Right lobe of liver (tissue), 6 donors: ENCODE measurements at regions of chr6 and their contacts with region 1.

Region 1: GRCh38 chr6:31058128-31058894 is 48.0 kb downstream of the MUC22 start:
- DNase-seq: no peak
- ATAC-seq: peak; percentile 43 to 79 (median 54)
- H3K4me3 ChIP-seq: no peak overlapping the region
- H3K27ac ChIP-seq: no peak overlapping the region
- H3K4me1 ChIP-seq: no peaks in the 10 kb centered on the region
- H3K27me3 ChIP-seq: no peaks in the 10 kb centered on the region
- CTCF ChIP-seq: peak; percentile 33 to 50 (median 42)
- POLR2A ChIP-seq: no peak

Region 2: DNA sequence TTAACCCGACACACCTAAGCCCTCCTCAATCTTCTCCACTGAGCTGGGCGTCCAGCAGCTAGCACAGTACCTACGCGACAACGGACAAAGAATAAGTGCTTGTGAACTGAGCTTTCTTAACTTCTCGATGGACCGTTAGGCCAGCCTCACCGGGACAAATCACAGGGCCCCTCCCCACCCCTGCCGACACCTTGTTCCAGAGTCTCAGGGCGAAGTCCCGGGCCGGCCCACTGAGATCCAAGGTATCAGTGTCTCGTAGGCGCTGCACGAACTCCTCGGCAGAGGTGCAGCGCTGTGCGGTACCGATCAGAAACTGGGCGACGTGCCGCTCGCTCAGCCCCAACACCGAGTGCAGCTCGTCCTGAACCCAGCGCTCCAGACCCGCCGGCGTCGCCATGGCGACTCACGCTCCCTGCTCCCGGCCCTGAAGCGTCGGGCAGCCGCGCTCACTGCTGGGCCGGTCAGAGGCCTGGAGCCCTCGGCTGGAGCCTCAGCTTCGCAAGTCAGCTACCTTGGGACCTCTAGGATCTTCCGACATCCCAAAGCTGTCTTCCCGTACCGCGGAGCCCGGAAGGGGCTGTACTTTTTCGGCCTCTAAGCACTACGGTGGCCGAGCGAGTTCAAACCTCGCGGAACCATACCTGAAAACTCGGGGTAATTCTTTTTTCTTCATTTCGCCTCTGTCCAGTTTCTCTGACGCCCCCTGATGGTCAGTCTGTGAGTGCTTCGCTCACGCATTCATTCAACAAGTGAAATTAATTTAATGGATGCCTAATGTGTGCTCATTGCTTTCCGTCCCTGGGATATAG is 385.7 kb before region 1 on chr6 and contains the start of gene DHX16:
- intact Hi-C with region 1: no loop called
- DNase-seq: peak; percentile 93 to 96 (median 94)
- ATAC-seq: peak; percentile 84 to 89 (median 84)
- H3K4me3 ChIP-seq: peak within 1 kb of the TSS; percentile 91 to 100 (median 100)
- H3K27ac ChIP-seq: peak within 1 kb of the TSS; percentile 54 to 60 (median 58)
- H3K4me1 ChIP-seq: peaks cover 0 to 45% (median 10%) of the 10 kb centered on the region in 4 donors
- H3K27me3 ChIP-seq: no peaks in the 10 kb centered on the region
- CTCF ChIP-seq: peak; percentile 82 to 89 (median 86)
- POLR2A ChIP-seq: peak; percentile 44
- total RNA-seq, gene DHX16: 12.3 to 17.8 (median 14.4) TPM

Region 3: DNA sequence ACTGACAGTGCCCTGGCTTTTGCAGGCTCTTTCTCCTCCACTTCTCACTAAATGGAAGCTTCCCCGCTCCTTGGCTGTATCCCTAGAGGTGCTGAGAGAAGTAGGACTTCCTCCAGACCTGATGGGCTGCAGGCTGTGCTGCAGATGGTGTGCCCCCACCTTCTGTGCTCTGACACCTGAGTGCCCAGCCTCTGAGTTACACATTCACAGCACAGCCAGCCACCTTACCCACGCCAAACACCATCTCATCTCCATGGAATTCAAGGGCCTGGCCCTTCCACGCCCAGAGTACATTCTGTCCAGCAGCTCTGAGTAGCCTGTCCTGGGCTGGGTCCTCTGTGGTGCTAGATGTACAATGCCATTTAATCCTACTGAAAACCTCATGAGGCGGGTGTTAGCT is 131.7 kb before region 1 on chr6:
- intact Hi-C with region 1: loop called in 1 of 2 experiments (anchors 10 kb)
- DNase-seq: no peak
- ATAC-seq: peak in 3 of 4 donors; percentile 31 to 34 (median 32)
- H3K4me3 ChIP-seq: no peak overlapping the region
- H3K27ac ChIP-seq: no peak overlapping the region
- H3K4me1 ChIP-seq: no peaks in the 10 kb centered on the region
- H3K27me3 ChIP-seq: no peaks in the 10 kb centered on the region
- CTCF ChIP-seq: no peak
- POLR2A ChIP-seq: no peak

Region 4: GRCh38 chr6:31216208-31216898 is 158.0 kb after region 1 on chr6:
- intact Hi-C with region 1: no loop called
- DNase-seq: peak in 1 of 3 donors; percentile 46
- ATAC-seq: peak; percentile 58 to 75 (median 68)
- H3K4me3 ChIP-seq: no peak overlapping the region
- H3K27ac ChIP-seq: peak overlapping the region in 1 of 3 donors; percentile 15
- H3K4me1 ChIP-seq: no peaks in the 10 kb centered on the region
- H3K27me3 ChIP-seq: no peaks in the 10 kb centered on the region
- CTCF ChIP-seq: no peak
- POLR2A ChIP-seq: no peak

Region 5: DNA sequence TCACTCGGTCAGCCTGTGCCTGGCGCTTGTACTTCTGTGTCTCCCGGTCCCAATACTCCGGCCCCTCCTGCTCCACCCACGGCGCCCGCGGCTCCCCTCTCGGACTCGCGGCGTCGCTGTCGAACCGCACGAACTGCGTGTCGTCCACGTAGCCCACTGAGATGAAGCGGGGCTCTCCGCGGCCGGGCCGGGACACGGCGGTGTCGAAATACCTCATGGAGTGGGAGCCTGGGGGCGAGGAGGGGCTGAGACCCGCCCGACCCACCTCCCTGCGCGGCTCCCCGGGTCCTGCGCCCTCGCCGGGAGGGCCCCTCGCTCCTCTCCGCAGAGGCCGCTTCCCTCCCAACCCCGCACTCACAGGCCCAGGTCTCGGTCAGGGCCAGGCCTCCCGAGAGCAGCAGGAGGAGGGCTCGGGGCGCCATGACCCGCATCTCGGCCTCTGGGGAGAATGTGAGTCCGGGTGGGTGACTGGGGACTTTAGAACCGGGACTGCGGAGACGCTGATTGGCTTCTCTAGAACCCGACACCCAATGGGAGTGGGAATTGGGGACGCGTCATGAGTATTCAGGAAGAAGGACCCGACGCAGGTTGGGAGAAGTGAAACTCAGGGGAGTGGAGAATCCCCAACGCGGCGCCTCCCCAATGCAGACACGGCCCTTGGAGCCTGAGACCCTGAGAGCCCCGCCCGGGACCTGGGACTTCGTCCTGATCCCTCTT is 213.5 kb after region 1 on chr6 and contains the start of gene HLA-C:
- intact Hi-C with region 1: no loop called
- DNase-seq: peak; percentile 87 to 96 (median 89)
- ATAC-seq: peak; percentile 93 to 97 (median 97)
- H3K4me3 ChIP-seq: peak within 1 kb of the TSS; percentile 53 to 75 (median 69)
- H3K27ac ChIP-seq: peak within 1 kb of the TSS; percentile 68 to 98 (median 97)
- H3K4me1 ChIP-seq: no peaks in the 10 kb centered on the region
- H3K27me3 ChIP-seq: no peaks in the 10 kb centered on the region
- CTCF ChIP-seq: no peak
- POLR2A ChIP-seq: peak; percentile 90
- total RNA-seq, gene HLA-C: 245 to 565 (median 439) TPM